IMR-90 (cell line): ENCODE measurements at regions of chr2 and their contacts with region 1.

Region 1: DNA sequence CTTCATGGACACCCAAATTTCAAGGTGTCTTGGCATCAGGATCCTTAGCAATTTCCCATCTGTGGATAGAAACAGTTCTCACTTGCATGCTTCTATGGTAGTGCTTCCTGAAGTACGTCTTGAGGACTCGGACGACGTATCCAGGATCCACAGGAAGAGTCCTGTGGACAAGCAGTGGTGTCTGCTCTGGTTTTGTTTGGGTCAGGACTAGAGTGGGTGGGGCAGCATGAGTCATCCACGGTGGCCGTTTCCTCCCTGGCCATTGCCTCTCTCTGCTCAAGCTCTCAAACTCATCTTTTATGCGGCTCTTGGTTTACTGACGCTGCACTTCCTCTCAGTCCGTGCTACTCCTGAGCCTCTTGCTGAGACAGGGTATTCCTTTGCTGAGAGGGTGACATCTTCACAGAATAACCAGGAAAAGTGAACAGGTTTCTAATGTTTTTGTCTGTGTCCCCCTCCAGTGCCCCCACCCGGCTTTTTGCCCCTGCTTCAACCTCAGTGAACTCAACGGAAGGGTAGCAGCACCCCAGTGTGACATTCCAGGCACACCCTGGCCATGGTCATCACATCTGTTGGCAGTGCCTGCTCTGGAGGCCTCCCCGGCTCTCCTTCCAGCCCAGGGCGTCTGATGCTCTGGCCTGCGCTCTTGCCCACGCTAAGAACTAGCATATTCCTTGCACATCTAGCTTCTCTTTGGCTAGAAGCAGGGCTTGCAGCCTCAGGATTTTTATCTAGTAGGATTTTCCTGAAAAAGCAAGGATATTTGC is 62.2 kb downstream of the ARMC9 start:
- DNase-seq: peak; percentile 22
- ATAC-seq: peak; percentile 46
- H3K4me3 ChIP-seq: no peak overlapping the region
- H3K27ac ChIP-seq: no peak overlapping the region
- H3K4me1 ChIP-seq: no peaks in the 10 kb centered on the region
- H3K27me3 ChIP-seq: no peaks in the 10 kb centered on the region
- CTCF ChIP-seq: no peak
- POLR2A ChIP-seq: no peak
- RAD21 ChIP-seq: no peak

Region 2: GRCh38 chr2:231290321-231291015 is 29.8 kb after region 1 on chr2:
- CTCF ChIA-PET with region 1: no interaction called
- POLR2A ChIA-PET with region 1: no interaction called
- dilution Hi-C with region 1: no loop called
- in situ Hi-C with region 1: no loop called
- intact Hi-C with region 1: loop called (anchors 1 kb)
- DNase-seq: no peak
- ATAC-seq: no peak
- H3K4me3 ChIP-seq: no peak overlapping the region
- H3K27ac ChIP-seq: no peak overlapping the region
- H3K4me1 ChIP-seq: no peaks in the 10 kb centered on the region
- H3K27me3 ChIP-seq: no peaks in the 10 kb centered on the region
- CTCF ChIP-seq: no peak
- POLR2A ChIP-seq: no peak
- RAD21 ChIP-seq: no peak

Region 3: GRCh38 chr2:231640641-231641135 is 380.1 kb after region 1 on chr2:
- CTCF ChIA-PET with region 1: no interaction called
- POLR2A ChIA-PET with region 1: no interaction called
- dilution Hi-C with region 1: no loop called
- in situ Hi-C with region 1: no loop called
- intact Hi-C with region 1: no loop called
- DNase-seq: no peak
- ATAC-seq: no peak
- H3K4me3 ChIP-seq: no peak overlapping the region
- H3K27ac ChIP-seq: peak overlapping the region; percentile 47; the same call in 1 of the 2 replicates
- H3K4me1 ChIP-seq: peaks cover 13% of the 10 kb centered on the region
- H3K27me3 ChIP-seq: no peaks in the 10 kb centered on the region
- CTCF ChIP-seq: no peak
- POLR2A ChIP-seq: no peak
- RAD21 ChIP-seq: no peak